Activated CD4-positive, alpha-beta T cell treated with anti-CD3 and anti-CD28 coated beads, Interleukin-2, amount 10 ng/mL, durations not matched to agents 24 days and 14 days (primary cell): ENCODE measurements at regions of chr4 and their contacts with region 1.

Region 1: DNA sequence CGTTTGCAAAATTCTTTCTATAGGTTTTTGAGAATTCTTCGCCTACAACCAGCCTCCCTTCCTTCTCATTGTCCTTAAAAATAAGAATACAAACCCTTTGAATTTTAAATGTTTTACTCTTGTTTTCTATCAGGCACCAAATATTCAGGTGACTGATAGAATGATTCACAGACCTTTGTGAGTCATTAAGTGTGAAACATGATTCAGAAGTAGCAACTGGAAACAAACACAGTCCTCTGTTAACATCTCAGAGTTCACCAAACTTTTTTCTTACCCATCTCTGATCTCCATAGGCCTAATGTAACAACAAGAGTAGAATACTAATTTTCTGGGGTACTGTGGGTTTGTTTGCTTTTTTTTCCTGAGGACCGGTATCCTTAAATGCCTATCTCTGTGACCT is 63.4 kb upstream of the MAB21L2 start:
- DNase-seq: no peak
- H3K4me3 Mint-ChIP-seq: no peak overlapping the region
- H3K27ac Mint-ChIP-seq: peak overlapping the region; percentile 76
- H3K4me1 Mint-ChIP-seq: peaks cover 13% of the 10 kb centered on the region
- H3K27me3 Mint-ChIP-seq: no peaks in the 10 kb centered on the region

Region 2: GRCh38 chr4:150436598-150437370 is 81.8 kb before region 1 on chr4:
- intact Hi-C with region 1: loop called (anchors 2 kb)
- DNase-seq: no peak
- H3K4me3 Mint-ChIP-seq: peak overlapping the region; percentile 2
- H3K27ac Mint-ChIP-seq: peak overlapping the region; percentile 20
- H3K4me1 Mint-ChIP-seq: peaks cover 8% of the 10 kb centered on the region
- H3K27me3 Mint-ChIP-seq: no peaks in the 10 kb centered on the region

Region 3: GRCh38 chr4:150573534-150573933 is 55.0 kb after region 1 on chr4:
- intact Hi-C with region 1: loop called (anchors 5 kb)
- DNase-seq: no peak
- H3K4me3 Mint-ChIP-seq: no peak overlapping the region
- H3K27ac Mint-ChIP-seq: peak overlapping the region; percentile 9
- H3K4me1 Mint-ChIP-seq: peaks cover 9% of the 10 kb centered on the region
- H3K27me3 Mint-ChIP-seq: no peaks in the 10 kb centered on the region

Region 4: GRCh38 chr4:150591406-150591805 is 72.8 kb after region 1 on chr4:
- intact Hi-C with region 1: no loop called
- DNase-seq: no peak
- H3K4me3 Mint-ChIP-seq: no peak overlapping the region
- H3K27ac Mint-ChIP-seq: no peak overlapping the region
- H3K4me1 Mint-ChIP-seq: no peaks in the 10 kb centered on the region
- H3K27me3 Mint-ChIP-seq: no peaks in the 10 kb centered on the region